Caco-2 (cell line): ENCODE measurements at regions of chr18 and their contacts with region 1.

Region 1: GRCh38 chr18:4605212-4605611 is 150.1 kb upstream of the DLGAP1 start:
- DNase-seq: no peak
- H3K4me3 ChIP-seq: no peak overlapping the region
- H3K4me3 Mint-ChIP-seq: no peak overlapping the region
- H3K27ac Mint-ChIP-seq: no peak overlapping the region
- H3K4me1 ChIP-seq: no peaks in the 10 kb centered on the region
- H3K4me1 Mint-ChIP-seq: no peaks in the 10 kb centered on the region
- H3K27me3 ChIP-seq: no peaks in the 10 kb centered on the region; the same call in 1 of the 2 replicates
- H3K27me3 Mint-ChIP-seq: peaks cover 4% of the 10 kb centered on the region
- CTCF ChIP-seq: no peak

Region 2: DNA sequence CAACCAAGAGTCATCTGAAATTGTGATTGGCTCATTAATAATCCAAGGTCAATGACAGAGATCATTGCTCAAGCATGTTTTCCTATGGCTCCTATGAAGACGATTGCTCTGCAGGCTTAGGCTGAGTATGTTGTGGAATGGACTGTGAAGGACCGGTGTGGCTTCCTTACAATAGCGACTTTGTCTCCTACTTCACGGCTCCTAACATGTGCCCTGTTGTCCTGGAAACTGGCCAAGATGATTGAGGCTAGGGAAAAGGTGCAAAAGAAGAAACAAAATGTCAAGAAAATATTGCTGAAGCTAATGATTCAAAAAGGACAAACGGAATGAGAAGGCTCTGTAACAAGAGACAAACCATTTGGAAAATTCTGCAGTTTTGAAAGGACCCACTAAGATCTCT is 174.4 kb before region 1 on chr18:
- CTCF ChIA-PET with region 1: no interaction called
- POLR2A ChIA-PET with region 1: no interaction called
- intact Hi-C with region 1: no loop called
- DNase-seq: no peak
- H3K4me3 ChIP-seq: no peak overlapping the region
- H3K4me3 Mint-ChIP-seq: no peak overlapping the region
- H3K27ac Mint-ChIP-seq: no peak overlapping the region
- H3K4me1 ChIP-seq: peaks cover 6% of the 10 kb centered on the region; the same call in 1 of the 2 replicates
- H3K4me1 Mint-ChIP-seq: no peaks in the 10 kb centered on the region
- H3K27me3 ChIP-seq: no peaks in the 10 kb centered on the region
- H3K27me3 Mint-ChIP-seq: peaks cover 6% of the 10 kb centered on the region
- CTCF ChIP-seq: no peak

Region 3: GRCh38 chr18:4672152-4672551 is 66.9 kb after region 1 on chr18:
- CTCF ChIA-PET with region 1: no interaction called
- POLR2A ChIA-PET with region 1: no interaction called
- intact Hi-C with region 1: loop called (anchors 10 kb)
- DNase-seq: no peak
- H3K4me3 ChIP-seq: no peak overlapping the region
- H3K4me3 Mint-ChIP-seq: no peak overlapping the region
- H3K27ac Mint-ChIP-seq: no peak overlapping the region
- H3K4me1 ChIP-seq: no peaks in the 10 kb centered on the region
- H3K4me1 Mint-ChIP-seq: no peaks in the 10 kb centered on the region
- H3K27me3 ChIP-seq: no peaks in the 10 kb centered on the region
- H3K27me3 Mint-ChIP-seq: no peaks in the 10 kb centered on the region
- CTCF ChIP-seq: no peak